ENCODE measurements at regions of chr7 and their contacts with region 1.

Region 1: GRCh38 chr7:76234931-76235441 is 33.3 kb downstream of the SRRM3 start:
- DNase-seq: peak; percentile 81
- H3K4me3 Mint-ChIP-seq: peak overlapping the region; percentile 46
- H3K27ac Mint-ChIP-seq: no peak overlapping the region
- H3K4me1 Mint-ChIP-seq: peaks cover 3% of the 10 kb centered on the region
- H3K27me3 Mint-ChIP-seq: peaks cover 45% of the 10 kb centered on the region

Region 2: GRCh38 chr7:75962607-75963380 is 272.2 kb before region 1 on chr7:
- intact Hi-C with region 1: no loop called
- DNase-seq: no peak
- H3K4me3 Mint-ChIP-seq: no peak overlapping the region
- H3K27ac Mint-ChIP-seq: no peak overlapping the region
- H3K4me1 Mint-ChIP-seq: no peaks in the 10 kb centered on the region
- H3K27me3 Mint-ChIP-seq: no peaks in the 10 kb centered on the region

Region 3: DNA sequence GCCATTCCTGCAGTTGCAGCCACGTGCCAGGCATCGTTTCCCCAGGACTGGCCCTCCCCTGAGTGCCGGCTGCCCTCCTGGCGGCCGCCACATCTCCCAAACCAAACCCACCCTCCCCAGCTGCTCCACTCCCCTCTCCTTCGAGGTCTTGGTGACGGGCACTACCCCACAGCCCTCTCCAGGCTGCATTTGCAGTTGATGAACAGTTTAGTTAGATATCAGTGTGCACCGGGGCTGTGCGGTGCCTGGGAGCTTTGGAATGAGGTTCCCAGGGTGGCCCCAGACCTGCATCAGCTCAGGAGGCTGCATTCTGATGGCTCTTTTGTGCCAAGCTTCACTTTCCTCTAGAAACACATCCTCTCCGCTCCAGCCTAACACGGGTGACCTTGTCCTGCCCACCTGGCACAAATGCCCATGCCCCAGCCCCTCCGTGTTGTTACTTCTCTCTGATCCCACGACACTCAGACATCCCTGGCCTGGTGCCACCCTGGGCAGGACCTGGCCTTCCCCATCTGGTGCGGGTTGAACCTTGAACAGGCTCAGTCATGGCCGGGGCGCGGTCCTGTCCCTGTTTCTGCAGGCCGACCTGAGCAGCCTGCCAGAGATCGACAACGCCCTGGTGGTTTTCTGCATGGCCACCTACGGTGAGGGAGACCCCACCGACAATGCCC is 255.1 kb before region 1 on chr7:
- intact Hi-C with region 1: no loop called
- DNase-seq: no peak
- H3K4me3 Mint-ChIP-seq: no peak overlapping the region
- H3K27ac Mint-ChIP-seq: no peak overlapping the region
- H3K4me1 Mint-ChIP-seq: no peaks in the 10 kb centered on the region
- H3K27me3 Mint-ChIP-seq: no peaks in the 10 kb centered on the region

Region 4: DNA sequence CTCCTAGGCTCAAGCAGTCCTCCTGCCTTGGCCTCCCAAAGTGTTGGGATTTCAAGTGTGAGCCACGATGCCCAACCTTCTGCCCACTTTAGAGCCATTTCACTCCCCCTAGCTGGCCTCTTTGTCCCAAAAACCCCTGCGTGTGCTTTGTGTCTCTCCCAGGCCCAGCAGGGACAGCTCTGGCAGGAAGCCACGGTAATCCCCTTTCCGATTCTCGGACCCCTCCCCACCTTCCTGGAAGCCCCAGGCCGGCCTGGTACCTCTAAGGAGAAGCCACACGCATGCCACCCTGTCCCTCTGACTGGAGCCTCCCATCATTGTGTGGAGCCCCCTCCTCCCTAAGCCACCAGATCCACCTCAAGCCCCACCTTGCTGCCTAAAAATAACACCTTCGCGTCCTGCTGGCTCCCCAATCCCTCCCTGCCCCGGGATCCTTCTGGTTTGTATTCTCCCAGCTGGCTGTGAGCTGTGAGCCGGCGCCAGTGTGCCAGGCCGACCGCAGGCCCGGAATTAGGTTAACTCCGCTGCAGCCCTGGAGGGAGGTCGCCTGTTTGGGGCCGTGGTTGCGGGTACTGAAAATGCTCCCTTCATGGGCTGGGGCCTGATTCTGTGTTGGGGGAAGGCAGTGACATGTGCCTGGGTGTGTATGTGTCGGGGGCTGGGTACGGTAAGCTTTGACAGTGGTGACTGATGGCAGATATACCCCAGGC is 49.6 kb before region 1 on chr7:
- intact Hi-C with region 1: loop called (anchors 10 kb)
- DNase-seq: no peak
- H3K4me3 Mint-ChIP-seq: no peak overlapping the region
- H3K27ac Mint-ChIP-seq: no peak overlapping the region
- H3K4me1 Mint-ChIP-seq: no peaks in the 10 kb centered on the region
- H3K27me3 Mint-ChIP-seq: no peaks in the 10 kb centered on the region

Region 5: GRCh38 chr7:76201730-76202665 is 33.0 kb before region 1 on chr7 and contains the start of gene SRRM3:
- intact Hi-C with region 1: loop called (anchors 2 kb)
- DNase-seq: peak; percentile 80
- H3K4me3 Mint-ChIP-seq: no peak within 1 kb of the TSS
- H3K27ac Mint-ChIP-seq: no peak within 1 kb of the TSS
- H3K4me1 Mint-ChIP-seq: no peaks in the 10 kb centered on the region
- H3K27me3 Mint-ChIP-seq: peaks cover 6% of the 10 kb centered on the region
- total RNA-seq, gene SRRM3: 0.11 and 0.23 TPM in 2 replicates

Region 6: DNA sequence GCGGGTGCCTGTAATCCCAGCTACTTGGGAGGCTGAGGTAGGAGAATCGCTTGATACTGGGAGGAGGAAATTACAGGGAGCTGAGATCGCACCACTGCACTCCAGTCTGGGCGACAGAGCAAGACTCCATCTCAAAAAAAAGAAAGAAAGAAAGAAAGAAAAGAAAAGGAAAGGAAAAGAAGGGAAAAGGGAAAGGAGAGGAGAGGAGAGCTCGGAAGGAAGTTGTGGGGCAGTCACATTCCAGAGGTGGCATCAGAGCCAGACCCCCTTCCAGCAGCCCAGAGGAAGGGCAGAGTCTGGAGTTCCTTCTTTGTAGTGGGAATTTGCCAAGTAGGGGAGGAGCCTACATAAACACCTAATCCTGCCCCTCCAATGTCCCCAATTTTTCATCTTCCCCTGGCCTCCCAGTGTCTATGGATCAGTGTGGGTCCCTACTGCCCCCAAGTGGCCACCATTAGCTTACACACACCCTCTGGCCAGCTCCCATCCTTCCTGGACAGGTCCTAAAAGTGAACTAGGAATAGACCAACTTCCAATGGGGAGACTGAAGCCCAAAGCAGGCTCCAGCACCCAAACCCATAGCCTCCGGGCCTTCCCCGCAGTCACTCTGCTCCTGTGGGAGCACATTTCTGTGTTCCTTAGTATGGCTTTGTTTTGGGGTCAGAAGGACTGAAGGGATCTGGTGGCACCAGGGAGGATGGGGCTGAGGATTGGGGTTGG is 27.9 kb after region 1 on chr7:
- intact Hi-C with region 1: loop called (anchors 1 kb)
- DNase-seq: no peak
- H3K4me3 Mint-ChIP-seq: no peak overlapping the region
- H3K27ac Mint-ChIP-seq: no peak overlapping the region
- H3K4me1 Mint-ChIP-seq: peaks cover under 1% of the 10 kb centered on the region
- H3K27me3 Mint-ChIP-seq: peaks cover 20% of the 10 kb centered on the region